Dendritic cell treated with granulocyte-macrophage colony-stimulating factor and Interleukin-4, amounts not matched to agents 40 ng/mL and 50 ng/mL, for 4 days (primary cell): ENCODE measurements at regions of chr3 and their contacts with region 1.

Region 1: DNA sequence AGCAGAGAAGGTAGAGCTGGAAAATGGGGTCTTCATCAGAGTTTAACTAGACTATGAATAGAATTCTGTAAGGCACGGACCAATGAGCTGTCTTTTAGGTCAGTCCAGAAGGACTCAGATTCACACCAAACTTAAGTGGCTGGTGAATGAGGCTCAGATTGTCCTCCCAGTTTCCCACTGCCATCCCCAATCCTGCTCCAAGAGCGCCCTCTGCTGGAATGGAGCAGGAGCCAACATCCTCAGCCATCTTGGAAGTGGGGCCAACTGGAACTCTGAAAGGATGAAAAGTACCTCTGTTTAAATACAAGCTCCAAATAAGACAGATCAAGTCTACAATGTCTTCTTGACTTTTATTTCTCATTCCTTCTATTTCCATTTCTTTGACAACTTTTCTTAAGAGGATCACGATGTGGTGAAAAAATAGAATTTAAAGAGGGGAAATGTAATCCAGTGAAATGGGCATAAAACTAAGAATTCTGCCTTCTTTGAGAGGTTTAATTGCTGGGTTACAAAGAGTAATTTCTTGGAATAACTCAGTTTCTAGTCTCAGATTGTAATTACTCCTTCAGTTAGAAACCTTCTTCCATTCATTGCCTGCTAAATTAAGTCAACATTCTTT is 217.1 kb upstream of the TPRG1 start:
- H3K4me3 Mint-ChIP-seq: no peak overlapping the region
- H3K27ac Mint-ChIP-seq: no peak overlapping the region
- H3K4me1 Mint-ChIP-seq: peaks cover 38% of the 10 kb centered on the region
- H3K27me3 Mint-ChIP-seq: no peaks in the 10 kb centered on the region

Region 2: GRCh38 chr3:188154014-188154808 is 800.5 kb before region 1 on chr3 and contains the start of gene LPP:
- intact Hi-C with region 1: loop called (anchors 10 kb)
- H3K4me3 Mint-ChIP-seq: peak within 1 kb of the TSS; percentile 99
- H3K27ac Mint-ChIP-seq: peak within 1 kb of the TSS; percentile 97
- H3K4me1 Mint-ChIP-seq: peaks cover 59% of the 10 kb centered on the region
- H3K27me3 Mint-ChIP-seq: no peaks in the 10 kb centered on the region

Region 3: DNA sequence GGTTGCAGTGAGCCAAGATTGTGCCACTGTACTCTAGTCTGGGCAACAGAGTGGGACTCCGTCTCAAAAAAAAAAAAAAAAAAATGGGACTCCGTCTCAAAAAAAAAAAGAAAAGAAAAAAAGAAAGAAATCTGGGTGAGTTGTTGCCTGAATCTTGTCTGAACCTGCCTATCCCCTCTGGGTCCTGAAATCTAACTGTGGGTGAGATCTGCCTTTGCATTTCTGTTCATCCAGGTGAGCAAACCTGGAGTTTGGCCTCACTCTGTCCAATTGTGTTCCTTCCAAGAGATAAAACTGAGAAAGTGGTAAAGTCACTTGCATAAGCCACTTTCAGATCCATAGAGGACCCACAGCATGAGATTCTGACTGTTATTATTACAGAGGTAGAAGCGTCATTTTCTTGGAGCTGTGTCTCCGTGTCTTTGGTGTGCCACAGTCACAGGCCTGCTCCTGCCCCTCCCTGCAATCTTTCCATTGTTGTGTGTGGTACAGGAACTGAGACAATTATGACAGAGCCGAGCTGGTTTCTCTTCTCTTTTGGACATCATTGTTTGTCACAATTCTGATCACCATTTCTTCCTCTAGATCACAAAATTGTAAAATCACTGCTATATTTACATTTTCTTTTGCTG is 564.9 kb before region 1 on chr3:
- intact Hi-C with region 1: loop called (anchors 10 kb)
- H3K4me3 Mint-ChIP-seq: peak overlapping the region; percentile 34
- H3K27ac Mint-ChIP-seq: peak overlapping the region; percentile 96
- H3K4me1 Mint-ChIP-seq: peaks cover 66% of the 10 kb centered on the region
- H3K27me3 Mint-ChIP-seq: no peaks in the 10 kb centered on the region

Region 4: DNA sequence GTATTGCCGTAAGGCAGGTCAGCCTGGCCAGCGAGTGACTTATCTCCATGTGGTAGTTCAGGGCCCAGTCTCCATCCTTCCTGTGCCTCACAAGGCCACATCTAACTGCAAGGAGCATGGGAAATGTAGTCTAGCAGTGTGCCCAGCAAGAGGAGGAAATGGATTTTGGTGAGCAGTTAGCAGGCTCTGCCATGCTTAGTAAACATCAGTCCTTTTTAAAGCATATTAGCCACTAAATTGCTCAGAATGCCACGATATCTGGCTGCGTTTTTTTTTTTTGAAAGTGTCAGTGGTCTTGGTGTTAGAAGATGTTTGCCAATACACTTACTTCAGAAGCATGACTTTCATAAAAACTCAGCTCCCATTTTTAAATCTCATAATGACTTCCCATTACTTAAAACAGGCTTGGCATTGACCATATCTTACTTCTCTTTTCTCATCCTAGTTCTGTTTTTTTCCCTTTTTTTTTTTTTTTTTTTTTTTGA is 253.2 kb before region 1 on chr3:
- intact Hi-C with region 1: loop called (anchors 10 kb)
- H3K4me3 Mint-ChIP-seq: peak overlapping the region; percentile 68
- H3K27ac Mint-ChIP-seq: peak overlapping the region; percentile 86
- H3K4me1 Mint-ChIP-seq: peaks cover 55% of the 10 kb centered on the region
- H3K27me3 Mint-ChIP-seq: no peaks in the 10 kb centered on the region

Region 5: GRCh38 chr3:188830893-188831292 is 123.8 kb before region 1 on chr3:
- intact Hi-C with region 1: loop called (anchors 2 kb)
- H3K4me3 Mint-ChIP-seq: no peak overlapping the region
- H3K27ac Mint-ChIP-seq: peak overlapping the region; percentile 37
- H3K4me1 Mint-ChIP-seq: peaks cover 47% of the 10 kb centered on the region
- H3K27me3 Mint-ChIP-seq: no peaks in the 10 kb centered on the region

Region 6: DNA sequence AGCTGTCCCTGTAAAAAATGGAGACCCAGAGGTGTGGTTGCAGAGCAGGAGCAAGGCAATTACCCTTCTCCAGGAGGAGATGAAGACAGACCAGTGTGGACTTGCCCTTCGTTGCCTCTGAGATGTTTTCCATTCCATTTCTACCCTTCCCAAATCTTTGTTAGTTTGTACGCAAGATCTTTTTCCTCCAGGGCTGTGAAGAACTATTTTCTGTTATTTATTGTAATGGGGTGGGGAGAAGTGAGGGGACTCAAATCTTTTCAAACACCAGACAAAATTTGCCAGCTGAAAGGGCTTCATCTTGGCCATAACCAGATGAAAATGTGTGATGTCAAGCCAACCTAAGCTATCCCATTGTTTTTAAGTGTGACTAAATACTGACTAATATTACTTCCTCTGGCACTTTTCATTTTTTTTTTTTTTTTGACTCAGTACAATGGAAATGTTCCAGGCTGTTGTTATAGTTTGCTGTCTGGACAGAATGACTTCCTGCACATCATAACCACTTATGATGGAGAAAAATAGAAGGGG is 54.2 kb before region 1 on chr3:
- intact Hi-C with region 1: loop called (anchors 5 kb)
- H3K4me3 Mint-ChIP-seq: no peak overlapping the region
- H3K27ac Mint-ChIP-seq: peak overlapping the region; percentile 35
- H3K4me1 Mint-ChIP-seq: peaks cover 49% of the 10 kb centered on the region
- H3K27me3 Mint-ChIP-seq: no peaks in the 10 kb centered on the region

Region 7: GRCh38 chr3:189148081-189148507 is 193.4 kb after region 1 on chr3:
- intact Hi-C with region 1: loop called (anchors 2 kb)
- H3K4me3 Mint-ChIP-seq: no peak overlapping the region
- H3K27ac Mint-ChIP-seq: no peak overlapping the region
- H3K4me1 Mint-ChIP-seq: peaks cover 23% of the 10 kb centered on the region
- H3K27me3 Mint-ChIP-seq: peaks cover 4% of the 10 kb centered on the region